Sigmoid colon (tissue), 7 donors: ENCODE measurements at regions of chr16 and their contacts with region 1.

Region 1: DNA sequence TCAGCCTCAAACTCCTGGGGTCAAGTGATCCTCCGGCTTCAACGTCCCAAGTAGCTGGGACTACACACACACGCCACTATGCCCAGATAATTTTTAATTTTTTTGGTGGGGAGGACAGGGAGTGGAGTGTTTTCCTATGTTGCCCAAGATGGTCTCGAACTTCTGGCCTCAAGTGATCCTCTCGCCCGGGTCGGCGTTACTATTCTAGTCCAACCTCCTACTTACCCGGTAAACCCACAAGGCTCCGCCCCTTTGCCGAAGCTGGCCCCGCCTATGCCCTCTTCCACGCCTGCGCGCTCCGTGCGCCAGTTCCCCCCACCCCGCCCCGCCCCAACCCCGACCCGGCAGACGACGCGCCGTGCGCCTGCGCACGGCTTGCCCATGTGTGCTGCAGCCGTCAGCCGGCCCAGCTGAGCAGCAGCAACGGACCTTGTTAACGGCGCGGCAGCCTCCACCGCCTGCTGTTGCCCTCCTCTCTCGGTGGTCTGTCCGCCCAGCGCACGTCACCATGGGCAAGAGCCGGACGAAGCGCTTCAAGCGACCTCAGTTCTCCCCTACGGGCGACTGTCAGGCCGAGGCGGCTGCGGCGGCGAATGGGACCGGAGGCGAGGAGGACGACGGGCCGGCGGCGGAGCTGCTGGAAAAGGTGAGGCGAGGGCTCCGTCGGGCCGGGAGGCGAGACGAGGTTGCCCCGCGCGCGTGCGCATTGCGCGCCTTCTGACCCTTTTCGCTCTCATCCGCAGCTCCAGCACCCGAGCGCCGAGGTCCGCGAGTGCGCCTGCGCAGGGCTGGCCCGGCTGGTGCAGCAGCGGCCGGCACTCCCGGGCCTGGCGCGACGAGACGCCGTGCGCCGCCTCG is at the start of gene HEATR3:
- DNase-seq: peak; percentile 95
- H3K4me3 ChIP-seq: peak within 1 kb of the TSS; percentile 83 to 94 (median 93)
- H3K27ac ChIP-seq: peak within 1 kb of the TSS; percentile 94 to 100 (median 98)
- H3K4me1 ChIP-seq: peaks cover 0 to 27% (median 21%) of the 10 kb centered on the region in 4 donors
- H3K27me3 ChIP-seq: no peaks in the 10 kb centered on the region
- CTCF ChIP-seq: no peak
- EP300 ChIP-seq: no peak
- POLR2A ChIP-seq: peak; percentile 42 to 46
- total RNA-seq, gene HEATR3: 14.0 to 20.5 (median 15.1) TPM

Region 2: DNA sequence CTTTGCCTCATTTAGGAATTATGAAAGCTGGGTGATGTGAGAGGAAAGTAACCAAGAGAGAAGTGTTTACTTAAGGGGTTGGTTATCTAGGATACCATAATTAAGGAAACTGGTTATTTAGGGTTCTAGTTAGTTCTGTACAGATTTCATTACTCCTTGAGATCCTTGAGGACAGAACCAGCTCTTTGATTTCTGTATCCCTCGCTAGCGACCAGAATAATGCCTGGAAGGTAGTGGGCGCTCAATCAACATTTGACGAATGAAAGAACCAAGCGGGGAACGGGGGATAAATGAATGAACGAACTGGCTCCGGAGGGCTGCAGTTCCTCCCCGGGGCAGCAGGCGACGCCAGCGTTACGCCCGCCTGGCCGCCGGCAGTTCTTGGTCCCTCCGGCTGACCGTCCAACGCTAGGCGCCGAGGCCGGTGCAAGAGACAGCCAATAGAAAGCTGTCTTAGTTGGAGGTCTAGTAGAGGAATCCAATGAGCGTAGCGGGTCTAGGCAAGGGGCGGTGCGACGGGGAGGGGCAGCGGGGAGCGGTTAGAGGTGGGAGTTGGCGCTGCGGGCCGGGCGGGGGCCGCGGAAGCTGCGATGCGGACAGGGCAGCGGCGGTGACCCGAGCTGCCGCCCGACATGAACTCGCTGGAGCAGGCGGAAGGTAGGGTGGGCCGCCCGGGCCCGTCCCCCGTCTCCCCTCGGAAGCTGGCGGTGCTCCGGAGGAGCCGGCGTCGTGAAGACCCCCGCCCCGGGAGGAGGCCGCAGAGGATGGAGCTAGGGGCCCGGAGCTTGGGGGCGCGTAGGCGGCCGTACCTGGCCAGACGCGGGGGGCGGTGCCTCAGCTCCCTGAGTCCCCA is 40.9 kb before region 1 on chr16 and contains the start of gene CNEP1R1:
- intact Hi-C with region 1: loop called (anchors 1 kb)
- DNase-seq: peak; percentile 98
- H3K4me3 ChIP-seq: peak within 1 kb of the TSS; percentile 89 to 100 (median 100)
- H3K27ac ChIP-seq: peak within 1 kb of the TSS; percentile 84 to 91 (median 88)
- H3K4me1 ChIP-seq: peaks cover 0 to 35% (median 21%) of the 10 kb centered on the region in 4 donors
- H3K27me3 ChIP-seq: no peaks in the 10 kb centered on the region
- CTCF ChIP-seq: peak; percentile 99 to 100 (median 100)
- EP300 ChIP-seq: peak in 1 of 4 donors; percentile 44
- POLR2A ChIP-seq: peak; percentile 38 to 53
- total RNA-seq, gene CNEP1R1: 10.2 to 18.9 (median 14.1) TPM

Region 3: GRCh38 chr16:50136399-50136798 is 70.5 kb after region 1 on chr16:
- intact Hi-C with region 1: no loop called
- DNase-seq: no peak
- H3K4me3 ChIP-seq: no peak overlapping the region
- H3K27ac ChIP-seq: no peak overlapping the region
- H3K4me1 ChIP-seq: no peaks in the 10 kb centered on the region
- H3K27me3 ChIP-seq: no peaks in the 10 kb centered on the region
- CTCF ChIP-seq: no peak
- EP300 ChIP-seq: no peak
- POLR2A ChIP-seq: no peak

Region 4: DNA sequence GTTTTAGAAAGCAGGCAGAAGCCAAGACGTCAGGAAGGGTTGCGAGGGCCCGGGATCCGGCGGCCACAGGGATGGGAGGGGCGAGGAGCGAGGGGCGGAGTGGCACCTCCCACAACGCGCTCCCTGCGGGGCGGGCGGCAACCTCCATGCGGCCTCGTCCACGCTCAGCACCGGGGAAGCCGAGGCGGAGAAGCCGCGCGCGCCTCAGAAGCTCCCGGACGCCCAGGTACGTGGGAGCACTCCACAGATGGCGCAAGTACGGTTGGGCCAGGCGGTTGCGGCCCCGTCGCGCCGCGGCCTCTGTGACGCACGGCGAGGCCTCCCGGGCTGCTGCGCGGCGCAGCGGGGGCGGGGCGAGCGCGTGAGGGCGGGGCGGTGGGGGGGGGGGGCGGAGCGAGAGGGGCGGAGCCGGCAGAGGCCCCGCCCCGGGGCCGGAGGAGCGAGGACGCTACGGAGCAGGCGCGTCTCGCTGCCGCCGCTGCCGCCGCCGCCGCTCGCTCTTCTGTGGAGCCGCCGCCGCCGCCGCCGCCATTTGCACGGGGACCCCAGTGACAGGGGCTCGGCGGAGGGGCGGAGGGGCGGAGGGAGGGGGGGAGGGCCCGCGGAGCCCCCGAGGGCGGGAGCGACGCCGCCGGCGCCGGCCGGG is 87.1 kb after region 1 on chr16 and contains the start of gene TENT4B:
- intact Hi-C with region 1: loop called (anchors 1 kb)
- DNase-seq: peak; percentile 94
- H3K4me3 ChIP-seq: peak within 1 kb of the TSS; percentile 93 to 98 (median 96)
- H3K27ac ChIP-seq: peak within 1 kb of the TSS; percentile 89 to 96 (median 94)
- H3K4me1 ChIP-seq: peaks cover 0 to 41% (median 29%) of the 10 kb centered on the region in 4 donors
- H3K27me3 ChIP-seq: no peaks in the 10 kb centered on the region
- CTCF ChIP-seq: no peak
- EP300 ChIP-seq: no peak
- POLR2A ChIP-seq: peak; percentile 50 to 66
- total RNA-seq, gene TENT4B: 14.9 to 23.5 (median 20.0) TPM